ENCODE measurements at regions of chr12 and their contacts with region 1.

Region 1: GRCh38 chr12:8949342-8950220 is at the start of gene M6PR:
- DNase-seq: peak; percentile 78
- H3K4me3 ChIP-seq: peak within 1 kb of the TSS; percentile 92
- H3K27ac ChIP-seq: peak within 1 kb of the TSS; percentile 99
- H3K27me3 ChIP-seq: no peaks in the 10 kb centered on the region
- CTCF ChIP-seq: peak; percentile 60
- polyA plus RNA-seq, gene M6PR: 106 and 119 TPM in 2 replicates

Region 2: GRCh38 chr12:8852119-8852518 is 97.5 kb before region 1 on chr12:
- CTCF ChIA-PET with region 1: no interaction called
- POLR2A ChIA-PET with region 1: no interaction called
- DNase-seq: no peak
- H3K4me3 ChIP-seq: no peak overlapping the region
- H3K27ac ChIP-seq: no peak overlapping the region
- H3K27me3 ChIP-seq: no peaks in the 10 kb centered on the region
- CTCF ChIP-seq: no peak

Region 3: DNA sequence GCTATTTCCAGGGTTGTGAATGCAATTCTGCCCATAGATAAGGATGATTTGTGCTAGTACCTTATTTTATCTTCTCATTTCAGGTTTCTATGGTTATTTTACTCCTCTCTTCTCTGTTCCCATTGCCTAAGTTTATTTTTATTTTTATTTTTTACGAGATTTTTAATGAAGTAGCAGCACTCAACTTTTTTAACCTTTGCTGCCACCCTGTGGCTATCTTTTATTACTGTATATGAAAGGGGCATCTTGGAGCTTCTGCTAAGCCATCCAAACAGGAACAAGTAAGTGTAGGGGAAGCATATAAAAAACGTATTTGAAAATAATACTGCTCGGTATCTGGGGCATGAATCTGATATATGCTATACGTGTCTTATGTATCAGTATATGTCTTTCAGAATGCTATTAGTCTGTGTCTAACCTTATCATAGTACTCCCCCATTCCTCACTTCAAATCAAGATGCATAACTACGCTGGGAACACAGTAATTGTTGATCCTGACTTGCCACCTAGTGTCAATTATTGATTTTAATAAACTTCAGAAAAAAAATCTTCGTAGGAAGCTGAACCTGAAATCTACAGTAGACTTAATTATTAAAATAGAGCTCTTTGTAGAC is 100.0 kb after region 1 on chr12:
- CTCF ChIA-PET with region 1: interaction called, 19 read pairs
- POLR2A ChIA-PET with region 1: no interaction called
- DNase-seq: peak; percentile 11
- H3K4me3 ChIP-seq: no peak overlapping the region
- H3K27ac ChIP-seq: no peak overlapping the region
- H3K27me3 ChIP-seq: no peaks in the 10 kb centered on the region
- CTCF ChIP-seq: peak; percentile 54